Posterior vena cava (tissue), 2 donors: ENCODE measurements at regions of chr10 and their contacts with region 1.

Region 1: DNA sequence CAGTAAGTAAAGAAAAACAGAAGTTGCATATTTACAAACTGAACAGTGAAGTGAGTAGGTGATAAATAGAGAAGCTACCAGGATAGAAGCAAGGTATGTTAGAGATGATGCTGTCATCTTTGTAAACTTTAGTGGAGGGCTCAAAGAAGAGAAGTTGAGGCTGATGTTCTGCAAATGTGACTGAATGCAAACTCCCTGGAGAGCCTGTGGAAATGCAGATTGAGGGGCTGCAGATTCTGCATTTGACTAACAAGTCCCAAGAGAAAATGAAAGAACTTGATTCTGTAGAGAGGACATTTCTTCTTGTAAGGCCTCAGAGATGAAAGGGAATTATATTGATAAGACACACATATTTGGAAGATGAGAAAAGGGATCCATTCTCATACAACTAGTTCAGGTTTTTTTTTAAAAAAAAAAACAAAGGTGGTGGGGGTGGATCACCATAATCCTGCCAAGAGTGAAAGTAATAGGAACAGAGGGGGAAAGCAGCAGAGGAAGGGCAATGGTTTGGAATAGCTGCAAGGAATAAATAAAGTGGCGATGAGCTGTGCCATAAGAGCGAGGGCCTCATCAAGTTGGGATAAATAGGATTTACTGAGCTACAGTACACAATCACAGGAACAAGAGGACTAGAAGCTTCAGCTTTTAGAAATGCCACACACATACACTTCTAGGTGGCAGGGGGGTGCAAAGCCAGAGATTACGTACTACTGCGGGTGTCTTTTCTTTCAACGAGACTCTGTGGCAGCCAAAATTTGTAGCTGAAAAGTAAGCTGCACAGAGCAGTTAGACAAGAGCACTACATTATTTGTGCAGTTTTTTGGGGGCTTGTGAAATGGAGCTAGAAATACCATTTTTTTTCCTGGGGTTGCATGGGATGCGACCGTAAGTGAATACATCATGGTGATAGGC is 778.5 kb downstream of the NRG3 start:
- DNase-seq: no peak

Region 2: GRCh38 chr10:82609845-82610244 is 43.7 kb before region 1 on chr10:
- intact Hi-C with region 1: loop called in 1 of 2 experiments (anchors 1 kb)
- DNase-seq: no peak